WTC11 (cell line): ENCODE measurements at regions of chr15 and their contacts with region 1.

Region 1: GRCh38 chr15:91246998-91247397 is 146.9 kb downstream of the SV2B start:
- DNase-seq: no peak
- ATAC-seq: no peak
- H3K4me3 Mint-ChIP-seq: no peak overlapping the region
- H3K27ac Mint-ChIP-seq: no peak overlapping the region
- H3K4me1 Mint-ChIP-seq: peaks cover 4% of the 10 kb centered on the region; the same call in 1 of the 2 replicates
- H3K27me3 Mint-ChIP-seq: peaks cover 4% of the 10 kb centered on the region; the same call in 1 of the 2 replicates
- CTCF ChIP-seq: no peak

Region 2: GRCh38 chr15:91001209-91001608 is 245.8 kb before region 1 on chr15:
- CTCF ChIA-PET with region 1: no interaction called
- POLR2A ChIA-PET with region 1: no interaction called
- DNase-seq: no peak
- ATAC-seq: no peak
- H3K4me3 Mint-ChIP-seq: no peak overlapping the region
- H3K27ac Mint-ChIP-seq: no peak overlapping the region
- H3K4me1 Mint-ChIP-seq: 0 out of 2 replicates have a peak, but pooled peaks cover under 1% of the 10 kb centered on the region
- H3K27me3 Mint-ChIP-seq: no peaks in the 10 kb centered on the region
- CTCF ChIP-seq: no peak

Region 3: GRCh38 chr15:91099616-91099994 is 147.4 kb before region 1 on chr15:
- CTCF ChIA-PET with region 1: interaction called, 12 read pairs
- POLR2A ChIA-PET with region 1: no interaction called
- DNase-seq: peak; percentile 64
- ATAC-seq: peak; percentile 67
- H3K4me3 Mint-ChIP-seq: peak overlapping the region; percentile 77
- H3K27ac Mint-ChIP-seq: no peak overlapping the region
- H3K4me1 Mint-ChIP-seq: peaks cover 18% of the 10 kb centered on the region
- H3K27me3 Mint-ChIP-seq: peaks cover 84% of the 10 kb centered on the region
- CTCF ChIP-seq: no peak

Region 4: DNA sequence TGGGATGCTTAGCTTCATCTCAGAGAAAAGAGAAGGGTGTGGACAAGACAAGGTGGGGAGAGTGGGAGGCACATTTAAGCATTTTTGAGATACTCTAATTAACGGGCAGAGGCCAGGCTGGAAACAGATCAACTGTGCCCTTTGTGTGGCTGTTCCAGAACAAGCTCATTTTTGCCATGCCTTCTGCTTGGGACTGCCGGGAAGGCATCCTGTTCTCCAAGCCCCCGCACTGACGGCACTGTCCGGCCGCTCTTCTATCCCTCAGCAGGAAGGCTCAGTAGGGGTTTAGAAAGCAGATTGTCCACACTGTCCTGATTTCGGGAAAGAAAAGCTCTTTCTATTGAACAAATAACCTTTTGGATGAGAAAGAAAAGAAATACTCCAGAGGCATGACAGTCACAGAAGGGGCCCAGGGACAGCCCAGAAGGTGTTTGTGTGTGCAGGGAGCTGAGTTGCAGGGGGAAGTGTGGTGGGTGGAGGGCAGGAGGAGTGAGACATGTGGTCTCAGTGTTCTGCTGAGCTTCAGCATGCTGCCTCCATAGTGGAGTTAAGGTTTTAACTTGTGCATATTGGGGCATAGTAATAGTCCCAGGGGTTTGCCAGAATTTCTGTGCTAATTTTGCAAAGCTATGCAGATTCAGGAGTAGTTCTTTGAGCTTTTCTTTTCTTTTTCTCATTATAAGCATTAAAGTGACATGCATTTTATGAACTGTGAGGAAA is 119.6 kb before region 1 on chr15:
- CTCF ChIA-PET with region 1: interaction called, 10 read pairs
- POLR2A ChIA-PET with region 1: no interaction called
- DNase-seq: no peak
- ATAC-seq: peak; percentile 60
- H3K4me3 Mint-ChIP-seq: no peak overlapping the region
- H3K27ac Mint-ChIP-seq: no peak overlapping the region
- H3K4me1 Mint-ChIP-seq: peaks cover 11% of the 10 kb centered on the region
- H3K27me3 Mint-ChIP-seq: no peaks in the 10 kb centered on the region
- CTCF ChIP-seq: no peak

Region 5: GRCh38 chr15:91214675-91215590 is 32.1 kb before region 1 on chr15:
- CTCF ChIA-PET with region 1: interaction called, 11 read pairs
- POLR2A ChIA-PET with region 1: no interaction called
- DNase-seq: peak; percentile 30
- ATAC-seq: peak; percentile 86
- H3K4me3 Mint-ChIP-seq: no peak overlapping the region
- H3K27ac Mint-ChIP-seq: peak overlapping the region; percentile 63
- H3K4me1 Mint-ChIP-seq: peaks cover 15% of the 10 kb centered on the region
- H3K27me3 Mint-ChIP-seq: no peaks in the 10 kb centered on the region
- CTCF ChIP-seq: no peak

Region 6: DNA sequence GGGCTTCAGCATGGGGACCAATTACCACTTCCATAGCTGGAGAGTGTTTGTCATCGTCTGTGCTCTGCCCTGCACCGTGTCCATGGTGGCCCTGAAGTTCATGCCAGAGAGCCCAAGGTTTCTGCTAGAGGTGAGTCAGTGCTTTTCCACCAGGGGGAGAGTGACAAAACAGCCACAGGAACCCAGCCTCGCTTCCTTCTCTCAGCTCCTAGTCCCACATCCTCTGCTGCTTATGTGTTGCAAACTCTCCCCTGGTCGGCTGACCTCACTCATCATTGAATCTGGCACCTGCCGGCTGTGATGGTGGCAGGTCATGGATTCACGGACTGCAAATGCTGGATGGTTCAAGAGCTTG is 11.4 kb after region 1 on chr15:
- CTCF ChIA-PET with region 1: interaction called, 33 read pairs
- POLR2A ChIA-PET with region 1: no interaction called
- DNase-seq: peak; percentile 18
- ATAC-seq: peak; percentile 91
- H3K4me3 Mint-ChIP-seq: no peak overlapping the region
- H3K27ac Mint-ChIP-seq: no peak overlapping the region
- H3K4me1 Mint-ChIP-seq: no peaks in the 10 kb centered on the region
- H3K27me3 Mint-ChIP-seq: no peaks in the 10 kb centered on the region
- CTCF ChIP-seq: no peak

Region 7: GRCh38 chr15:91357011-91357410 is 110.0 kb after region 1 on chr15:
- CTCF ChIA-PET with region 1: no interaction called
- POLR2A ChIA-PET with region 1: no interaction called
- DNase-seq: no peak
- ATAC-seq: no peak
- H3K4me3 Mint-ChIP-seq: no peak overlapping the region
- H3K27ac Mint-ChIP-seq: no peak overlapping the region
- H3K4me1 Mint-ChIP-seq: no peaks in the 10 kb centered on the region; the same call in 1 of the 2 replicates
- H3K27me3 Mint-ChIP-seq: no peaks in the 10 kb centered on the region
- CTCF ChIP-seq: no peak